ENCODE measurements at regions of chr1 and their contacts with region 1.

Region 1: GRCh38 chr1:29396438-29397255 is 160.3 kb downstream of the PTPRU start:
- DNase-seq: peak; percentile 23
- H3K4me3 ChIP-seq: no peak overlapping the region
- H3K27ac ChIP-seq: no peak overlapping the region; a peak in 1 of 4 replicates
- H3K4me1 ChIP-seq: peaks cover 0 to 23% of the 10 kb centered on the region in 2 experiments; a peak in 1 of 4 replicates
- H3K27me3 ChIP-seq: no peaks in the 10 kb centered on the region
- CTCF ChIP-seq: no peak
- EP300 ChIP-seq: no peak
- RAD21 ChIP-seq: peak; percentile 61

Region 2: DNA sequence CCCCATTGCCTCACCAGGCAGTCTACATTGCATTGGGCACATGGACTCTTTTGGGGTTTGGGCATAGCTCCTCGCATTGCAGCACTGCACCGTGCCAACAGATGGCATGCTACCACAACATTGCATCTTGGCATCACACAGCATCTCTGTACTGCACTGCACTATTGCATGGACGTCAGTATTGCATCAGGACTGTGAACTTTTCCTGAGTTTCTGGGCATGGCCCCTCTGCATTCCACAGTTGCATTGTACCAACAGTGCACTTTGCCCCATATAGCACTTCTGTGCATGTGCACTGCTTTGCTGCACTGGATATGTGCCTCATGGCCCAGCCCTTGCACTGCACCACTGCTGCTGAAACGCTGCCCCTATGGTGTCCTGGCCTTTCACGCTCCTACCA is 150.8 kb before region 1 on chr1:
- CTCF ChIA-PET with region 1: interaction called, 10 read pairs
- POLR2A ChIA-PET with region 1: no interaction called
- DNase-seq: peak; percentile 68
- H3K4me3 ChIP-seq: no peak overlapping the region
- H3K27ac ChIP-seq: no peak overlapping the region
- H3K4me1 ChIP-seq: peaks cover 6 to 64% of the 10 kb centered on the region in 2 experiments; a peak in 2 of 4 replicates
- H3K27me3 ChIP-seq: no peaks in the 10 kb centered on the region
- CTCF ChIP-seq: peak; percentile 67
- EP300 ChIP-seq: no peak
- RAD21 ChIP-seq: peak; percentile 90

Region 3: DNA sequence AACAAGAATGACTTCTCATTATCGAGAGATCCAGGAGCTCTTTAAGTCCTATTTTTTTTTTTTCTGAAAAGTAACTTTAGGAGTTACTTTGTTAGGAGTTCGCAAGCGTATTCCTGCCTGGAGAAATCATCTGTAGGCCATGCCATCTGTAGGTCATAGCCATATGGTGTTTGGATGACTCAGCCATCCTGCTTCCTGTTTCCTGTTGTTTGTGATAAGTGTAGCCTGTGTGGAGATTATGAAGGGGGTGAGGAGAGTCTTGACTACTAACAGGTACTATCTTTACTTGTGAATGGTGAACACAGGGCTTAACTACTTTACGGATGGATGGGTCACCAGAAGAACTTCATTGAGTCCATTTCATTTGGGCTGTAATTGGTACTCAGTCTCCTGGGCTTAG is 166.9 kb after region 1 on chr1:
- CTCF ChIA-PET with region 1: no interaction called
- POLR2A ChIA-PET with region 1: no interaction called
- DNase-seq: no peak
- H3K4me3 ChIP-seq: no peak overlapping the region
- H3K27ac ChIP-seq: no peak overlapping the region
- H3K4me1 ChIP-seq: no peaks in the 10 kb centered on the region
- H3K27me3 ChIP-seq: no peaks in the 10 kb centered on the region
- CTCF ChIP-seq: no peak
- EP300 ChIP-seq: no peak
- RAD21 ChIP-seq: no peak

Measured in SK-N-SH (cell line).